Caco-2 (cell line): ENCODE measurements at regions of chr6 and their contacts with region 1.

Region 1: DNA sequence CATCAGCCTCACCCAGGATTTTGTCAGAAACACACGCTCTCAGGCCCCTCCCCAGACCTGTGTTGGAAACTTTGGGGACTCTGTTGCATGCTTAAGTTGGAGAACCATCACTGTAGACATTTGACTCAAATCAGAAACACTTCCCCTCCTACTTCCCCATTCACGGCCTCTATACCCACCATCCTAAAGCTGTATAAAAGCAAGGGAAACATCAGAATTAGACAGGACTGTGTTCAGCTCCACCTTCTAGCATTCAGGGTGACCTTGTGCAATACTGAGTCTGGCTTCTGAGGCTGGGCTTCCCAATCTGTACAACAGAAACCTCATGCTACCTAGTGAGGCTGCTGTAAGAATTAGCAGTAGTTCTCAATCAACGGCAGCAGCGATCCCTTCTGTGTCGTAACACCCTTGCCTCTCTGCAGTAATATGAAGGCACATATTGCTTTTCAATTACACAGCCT is 252.3 kb downstream of the LY86 start:
- DNase-seq: no peak
- H3K4me3 ChIP-seq: no peak overlapping the region
- H3K4me3 Mint-ChIP-seq: no peak overlapping the region
- H3K27ac Mint-ChIP-seq: peak overlapping the region; percentile 10
- H3K4me1 ChIP-seq: peaks cover 25% of the 10 kb centered on the region
- H3K4me1 Mint-ChIP-seq: peaks cover 32% of the 10 kb centered on the region
- H3K27me3 ChIP-seq: no peaks in the 10 kb centered on the region
- H3K27me3 Mint-ChIP-seq: no peaks in the 10 kb centered on the region
- CTCF ChIP-seq: no peak

Region 2: DNA sequence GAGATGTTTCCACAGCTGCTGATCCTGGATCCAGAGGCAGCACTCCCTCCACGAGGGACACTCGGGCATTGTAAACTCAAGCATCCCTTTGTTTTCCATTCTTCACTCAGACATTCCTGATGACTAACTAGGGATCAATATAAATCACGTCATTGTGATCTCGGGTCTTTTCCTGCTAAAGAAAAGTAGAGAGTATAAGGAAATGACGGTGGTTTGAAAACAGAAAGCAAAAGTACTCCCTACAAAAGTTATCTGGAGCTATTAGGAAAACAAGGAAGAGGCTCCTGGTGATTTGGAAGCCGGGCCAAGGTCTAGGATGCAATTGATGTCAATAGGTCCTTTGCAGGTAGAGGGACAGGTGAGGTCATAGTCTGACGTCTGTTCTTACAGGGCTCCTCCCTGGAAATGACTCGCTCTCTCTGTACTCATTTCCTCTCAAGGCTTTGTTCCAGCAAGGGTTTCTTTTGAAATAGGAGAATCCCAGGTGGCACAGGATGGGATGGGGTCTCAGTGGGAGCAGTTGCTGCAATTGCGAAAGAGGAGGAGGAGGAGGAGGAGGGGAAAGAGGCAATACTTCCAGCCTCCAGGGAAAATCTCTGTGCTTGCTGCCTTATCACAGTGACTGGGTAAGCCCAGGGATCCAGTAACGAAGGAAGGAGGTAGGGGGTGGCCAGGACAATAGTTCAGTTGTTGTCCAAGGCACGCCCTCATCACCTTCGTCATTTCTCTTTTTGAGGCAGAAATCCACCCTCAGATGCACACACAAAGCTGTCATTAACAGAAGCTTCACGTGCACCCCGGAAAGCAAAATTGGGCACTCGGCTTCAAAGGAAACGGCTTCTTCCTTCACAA is 29.5 kb before region 1 on chr6:
- CTCF ChIA-PET with region 1: no interaction called
- POLR2A ChIA-PET with region 1: no interaction called
- intact Hi-C with region 1: loop called (anchors 2 kb)
- DNase-seq: peak; percentile 58 to 71
- H3K4me3 ChIP-seq: peak overlapping the region; percentile 21
- H3K4me3 Mint-ChIP-seq: peak overlapping the region; percentile 68
- H3K27ac Mint-ChIP-seq: peak overlapping the region; percentile 82
- H3K4me1 ChIP-seq: peaks cover 14% of the 10 kb centered on the region
- H3K4me1 Mint-ChIP-seq: peaks cover 22% of the 10 kb centered on the region
- H3K27me3 ChIP-seq: no peaks in the 10 kb centered on the region
- H3K27me3 Mint-ChIP-seq: no peaks in the 10 kb centered on the region
- CTCF ChIP-seq: no peak

Region 3: DNA sequence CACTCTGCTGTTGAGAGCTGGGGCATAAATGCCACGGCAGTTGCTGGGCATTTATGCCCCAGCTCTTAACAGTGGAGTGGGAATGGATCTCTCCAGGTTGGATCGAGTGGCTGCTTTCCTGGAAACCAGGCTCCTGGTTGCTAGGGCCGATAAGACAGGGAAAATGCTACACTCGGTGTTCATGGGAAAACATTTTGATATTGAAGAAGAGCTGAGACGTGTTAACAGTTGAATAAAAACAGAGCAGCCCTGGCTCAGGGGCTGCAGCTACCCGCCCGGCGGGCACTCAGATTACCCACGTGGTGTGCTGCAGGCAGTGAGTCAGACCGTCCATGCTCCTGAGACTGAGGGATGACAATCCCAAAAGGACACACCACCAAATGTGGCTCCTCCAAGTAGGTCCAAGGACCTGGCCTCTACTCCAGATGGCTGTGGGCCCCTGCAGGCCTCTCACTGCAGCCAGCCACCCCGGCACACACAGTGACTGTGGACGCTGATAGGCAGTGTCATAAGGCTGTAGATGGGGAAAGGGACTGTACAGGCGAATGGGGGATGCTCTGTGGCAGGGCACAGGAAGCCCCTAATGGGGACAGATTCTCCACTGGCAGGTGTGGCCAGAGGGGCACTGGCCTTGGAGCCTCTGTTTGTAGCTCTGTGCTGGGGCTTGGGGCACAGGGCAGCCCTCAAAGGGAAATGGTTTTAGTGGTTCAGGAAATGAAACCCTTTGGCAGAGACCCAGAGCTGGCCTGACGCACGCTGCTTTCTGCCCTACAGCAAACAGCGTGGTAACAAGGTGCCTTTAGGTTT is 14.6 kb before region 1 on chr6:
- CTCF ChIA-PET with region 1: no interaction called
- POLR2A ChIA-PET with region 1: no interaction called
- intact Hi-C with region 1: no loop called
- DNase-seq: no peak
- H3K4me3 ChIP-seq: no peak overlapping the region
- H3K4me3 Mint-ChIP-seq: no peak overlapping the region
- H3K27ac Mint-ChIP-seq: no peak overlapping the region
- H3K4me1 ChIP-seq: no peaks in the 10 kb centered on the region
- H3K4me1 Mint-ChIP-seq: no peaks in the 10 kb centered on the region
- H3K27me3 ChIP-seq: no peaks in the 10 kb centered on the region
- H3K27me3 Mint-ChIP-seq: no peaks in the 10 kb centered on the region
- CTCF ChIP-seq: no peak

Region 4: DNA sequence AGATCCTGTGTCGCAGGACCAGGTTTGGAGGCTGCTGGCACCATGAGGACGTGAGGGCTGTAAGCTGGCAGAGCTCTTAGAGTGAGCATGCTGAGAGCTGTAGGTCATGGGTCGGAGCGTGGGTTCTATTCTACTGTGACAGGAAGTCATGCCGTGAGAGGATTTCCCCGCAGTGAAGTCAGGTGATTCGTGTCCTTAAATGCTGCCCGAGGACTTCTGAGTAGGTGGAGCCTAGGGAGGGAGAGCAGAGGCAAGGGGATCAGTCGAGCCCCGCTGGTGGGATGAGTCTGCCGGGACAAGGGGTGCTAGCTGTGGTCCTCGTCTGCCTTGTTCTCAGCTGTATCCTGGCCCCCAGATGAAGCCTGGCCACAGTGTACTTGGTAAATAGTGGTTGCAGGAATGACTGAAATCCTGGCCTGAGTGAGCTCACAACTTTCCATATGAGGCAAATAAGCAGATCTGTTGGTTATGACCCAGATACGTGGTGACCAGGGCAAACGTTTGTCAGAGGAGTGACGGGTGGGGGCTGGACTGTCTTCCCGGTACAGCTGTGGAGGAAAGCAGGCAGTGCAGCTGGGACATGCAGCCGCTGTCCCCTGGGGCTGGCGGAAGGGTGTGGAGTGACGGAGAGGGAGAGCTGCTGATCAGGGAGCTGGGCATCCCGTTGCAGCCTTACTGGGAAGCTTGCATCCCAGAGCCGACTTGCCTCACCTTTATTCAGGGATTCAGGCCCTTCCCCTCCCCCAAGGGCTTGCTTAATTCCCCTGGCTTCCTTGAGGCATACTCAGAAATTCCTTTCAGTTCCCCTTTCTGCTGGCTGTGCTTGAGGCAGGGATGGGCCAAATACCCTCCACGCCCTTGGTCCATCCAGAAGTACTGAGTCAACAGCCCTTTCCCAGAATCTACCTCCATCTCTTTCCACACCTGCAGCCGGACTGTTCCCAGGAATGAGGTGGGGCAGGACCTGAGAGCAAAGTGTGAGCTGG is 16.0 kb after region 1 on chr6:
- CTCF ChIA-PET with region 1: no interaction called
- POLR2A ChIA-PET with region 1: no interaction called
- intact Hi-C with region 1: no loop called
- DNase-seq: peak; percentile 58 to 84
- H3K4me3 ChIP-seq: peak overlapping the region; percentile 29
- H3K4me3 Mint-ChIP-seq: peak overlapping the region; percentile 56
- H3K27ac Mint-ChIP-seq: peak overlapping the region; percentile 84
- H3K4me1 ChIP-seq: peaks cover 20% of the 10 kb centered on the region
- H3K4me1 Mint-ChIP-seq: peaks cover 31% of the 10 kb centered on the region
- H3K27me3 ChIP-seq: no peaks in the 10 kb centered on the region
- H3K27me3 Mint-ChIP-seq: no peaks in the 10 kb centered on the region
- CTCF ChIP-seq: no peak

Region 5: GRCh38 chr6:6897140-6897539 is 56.3 kb after region 1 on chr6:
- CTCF ChIA-PET with region 1: no interaction called
- POLR2A ChIA-PET with region 1: interaction called, 8 read pairs
- intact Hi-C with region 1: loop called (anchors 5 kb)
- DNase-seq: peak; percentile 63 to 65
- H3K4me3 ChIP-seq: no peak overlapping the region
- H3K4me3 Mint-ChIP-seq: peak overlapping the region; percentile 44
- H3K27ac Mint-ChIP-seq: peak overlapping the region; percentile 70
- H3K4me1 ChIP-seq: peaks cover 31% of the 10 kb centered on the region
- H3K4me1 Mint-ChIP-seq: peaks cover 29% of the 10 kb centered on the region
- H3K27me3 ChIP-seq: no peaks in the 10 kb centered on the region
- H3K27me3 Mint-ChIP-seq: no peaks in the 10 kb centered on the region
- CTCF ChIP-seq: no peak

Region 6: GRCh38 chr6:6969761-6970223 is 128.9 kb after region 1 on chr6:
- CTCF ChIA-PET with region 1: no interaction called
- POLR2A ChIA-PET with region 1: no interaction called
- intact Hi-C with region 1: no loop called
- DNase-seq: peak; percentile 96 to 98
- H3K4me3 ChIP-seq: no peak overlapping the region
- H3K4me3 Mint-ChIP-seq: peak overlapping the region; percentile 52
- H3K27ac Mint-ChIP-seq: peak overlapping the region; percentile 98
- H3K4me1 ChIP-seq: peaks cover 54% of the 10 kb centered on the region
- H3K4me1 Mint-ChIP-seq: peaks cover 50% of the 10 kb centered on the region
- H3K27me3 ChIP-seq: no peaks in the 10 kb centered on the region
- H3K27me3 Mint-ChIP-seq: no peaks in the 10 kb centered on the region
- CTCF ChIP-seq: peak in 1 of 2 experiments; percentile 24